GM12878 (cell line): ENCODE measurements at regions of chr11 and their contacts with region 1.

Region 1: DNA sequence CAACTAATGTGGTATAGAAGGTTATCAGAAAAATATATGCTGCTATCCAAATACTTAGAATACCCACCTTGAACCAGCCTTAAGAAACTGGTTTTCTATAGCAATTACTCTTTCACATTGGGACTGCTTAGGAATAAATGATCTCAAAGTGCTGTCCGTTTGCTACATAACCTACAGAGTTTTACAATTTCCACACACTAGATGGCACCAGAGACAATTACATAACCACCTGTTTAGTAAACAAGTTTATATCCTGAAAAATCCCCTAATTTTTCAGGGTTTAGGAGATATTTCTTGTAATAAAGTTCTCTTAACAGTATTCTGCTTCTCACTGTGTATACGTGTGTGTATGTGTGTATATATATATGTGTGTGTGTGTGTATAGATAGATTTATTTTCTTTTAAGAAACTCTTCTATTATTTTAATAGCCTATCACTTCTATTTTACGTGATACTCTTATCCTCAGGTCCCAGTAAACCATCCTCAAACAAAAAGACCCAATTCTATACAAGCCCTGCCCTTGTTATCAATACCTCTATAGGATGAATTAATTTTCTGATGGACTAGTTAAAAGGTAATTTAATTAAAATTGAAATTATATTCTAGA is 6.7 kb upstream of the OR5I1 start:
- DNase-seq: no peak
- ATAC-seq: peak; percentile 61; the same call in 2 of the 3 replicates
- H3K4me3 ChIP-seq: no peak overlapping the region
- H3K27ac ChIP-seq: no peak overlapping the region
- H3K4me1 ChIP-seq: no peaks in the 10 kb centered on the region
- H3K27me3 ChIP-seq: no peaks in the 10 kb centered on the region
- CTCF ChIP-seq: peak; percentile 37 to 61 (median 38); a peak in 4 of 6 replicates
- EP300 ChIP-seq: no peak
- POLR2A ChIP-seq: no peak
- RAD21 ChIP-seq: peak; percentile 58

Region 2: GRCh38 chr11:55920537-55920936 is 22.4 kb before region 1 on chr11:
- CTCF ChIA-PET with region 1: no interaction called
- POLR2A ChIA-PET with region 1: no interaction called
- RAD21 ChIA-PET with region 1: no interaction called
- SMC1A ChIA-PET with region 1: no interaction called
- in situ Hi-C with region 1: no loop called
- intact Hi-C with region 1: loop called (anchors 2 kb)
- DNase-seq: no peak
- ATAC-seq: no peak
- H3K4me3 ChIP-seq: no peak overlapping the region
- H3K27ac ChIP-seq: no peak overlapping the region
- H3K4me1 ChIP-seq: no peaks in the 10 kb centered on the region
- H3K27me3 ChIP-seq: no peaks in the 10 kb centered on the region
- CTCF ChIP-seq: no peak
- EP300 ChIP-seq: no peak
- POLR2A ChIP-seq: no peak
- RAD21 ChIP-seq: no peak